ENCODE measurements at regions of chr2 and their contacts with region 1.

Region 1: DNA sequence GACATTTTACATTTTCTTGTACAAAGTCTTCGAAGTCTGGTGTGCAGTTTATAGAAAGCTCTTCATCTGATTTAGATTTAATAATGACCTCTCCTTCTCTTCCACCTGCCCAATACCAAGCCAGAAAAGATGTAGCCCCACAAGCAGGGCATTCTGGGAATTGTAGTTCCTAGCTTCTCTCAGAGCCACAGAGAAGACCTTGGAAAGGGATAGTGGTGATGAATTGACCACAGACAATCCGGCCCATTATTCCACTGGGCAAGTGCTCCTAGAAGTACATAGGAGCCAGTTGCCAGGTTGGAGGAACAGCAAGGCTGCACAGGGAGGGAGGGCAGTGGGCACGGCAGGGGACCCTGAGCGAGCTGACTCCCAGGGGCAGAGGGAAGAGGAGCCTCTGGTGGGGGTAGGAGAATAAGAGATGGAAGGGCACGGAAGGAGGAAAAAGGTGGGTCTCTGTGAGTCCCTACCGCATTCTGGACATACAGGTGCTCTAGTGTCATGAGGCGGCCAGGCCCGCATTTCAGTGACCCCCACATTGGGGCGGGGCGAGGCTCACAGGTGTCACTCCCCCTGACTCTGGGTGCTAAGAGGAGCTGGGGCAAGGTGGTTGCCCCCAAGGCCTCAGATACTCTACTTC is 152.5 kb upstream of the HAAO start:
- DNase-seq: no peak
- ATAC-seq: no peak
- H3K4me3 Mint-ChIP-seq: no peak overlapping the region
- H3K27ac Mint-ChIP-seq: no peak overlapping the region
- H3K4me1 Mint-ChIP-seq: peaks cover 3% of the 10 kb centered on the region
- H3K27me3 Mint-ChIP-seq: no peaks in the 10 kb centered on the region

Region 2: GRCh38 chr2:42828487-42829425 is 116.1 kb before region 1 on chr2:
- CTCF ChIA-PET with region 1: interaction called, 10 read pairs
- POLR2A ChIA-PET with region 1: no interaction called
- intact Hi-C with region 1: loop called in 1 of 2 experiments (anchors 2 kb)
- DNase-seq: peak; percentile 84
- ATAC-seq: peak; percentile 92
- H3K4me3 Mint-ChIP-seq: no peak overlapping the region
- H3K27ac Mint-ChIP-seq: no peak overlapping the region
- H3K4me1 Mint-ChIP-seq: peaks cover 10% of the 10 kb centered on the region
- H3K27me3 Mint-ChIP-seq: no peaks in the 10 kb centered on the region

Region 3: GRCh38 chr2:43024515-43025011 is 79.7 kb after region 1 on chr2:
- CTCF ChIA-PET with region 1: interaction called, 3 read pairs
- POLR2A ChIA-PET with region 1: no interaction called
- intact Hi-C with region 1: loop called in 1 of 2 experiments (anchors 2 kb)
- DNase-seq: peak; percentile 72
- ATAC-seq: peak; percentile 64
- H3K4me3 Mint-ChIP-seq: no peak overlapping the region
- H3K27ac Mint-ChIP-seq: no peak overlapping the region
- H3K4me1 Mint-ChIP-seq: peaks cover 14% of the 10 kb centered on the region
- H3K27me3 Mint-ChIP-seq: no peaks in the 10 kb centered on the region

Region 4: DNA sequence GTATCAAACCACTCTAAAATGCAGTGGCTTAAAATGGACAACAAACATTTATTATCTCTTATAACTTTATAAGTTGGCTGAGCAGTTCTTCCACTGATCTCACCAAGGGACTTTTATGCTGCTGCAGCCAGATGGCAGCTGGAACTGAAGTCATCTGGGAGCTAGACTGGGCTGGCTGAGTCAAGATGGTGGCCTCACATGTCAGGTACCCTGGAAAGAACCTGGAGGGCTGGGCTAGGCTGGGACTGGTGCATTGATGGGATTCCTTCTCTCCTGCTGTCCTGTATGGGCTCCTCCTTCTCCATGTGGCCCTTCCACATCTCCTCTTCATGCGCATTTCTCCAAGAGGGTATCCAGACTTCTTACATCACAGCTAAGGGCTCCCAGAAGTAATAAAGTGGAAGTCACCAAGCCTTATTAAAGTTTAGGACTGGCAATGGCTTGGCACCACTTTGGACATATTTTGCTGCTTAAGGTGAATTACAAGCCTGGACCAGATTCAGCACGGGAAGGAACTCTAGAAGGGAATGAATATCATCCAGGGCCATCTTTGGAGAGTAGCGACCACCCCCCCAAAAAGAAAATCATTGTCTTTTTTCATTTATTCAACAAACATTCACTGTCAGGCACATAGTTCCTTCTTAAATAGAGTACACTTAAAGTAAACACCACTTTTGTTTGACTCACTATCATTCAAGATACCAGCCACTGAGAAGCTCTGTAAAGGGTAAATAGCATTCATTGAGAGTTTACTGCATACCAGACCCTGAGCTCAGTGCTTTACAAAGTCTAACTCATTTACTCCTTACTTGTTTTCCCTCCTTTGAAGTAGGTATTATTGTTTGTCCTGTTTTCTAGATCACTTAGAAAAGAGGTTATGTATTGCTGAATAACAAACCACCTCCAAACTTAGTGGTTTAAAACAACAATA is 143.5 kb after region 1 on chr2:
- CTCF ChIA-PET with region 1: no interaction called
- POLR2A ChIA-PET with region 1: no interaction called
- intact Hi-C with region 1: no loop called
- DNase-seq: no peak
- ATAC-seq: no peak
- H3K4me3 Mint-ChIP-seq: no peak overlapping the region
- H3K27ac Mint-ChIP-seq: no peak overlapping the region
- H3K4me1 Mint-ChIP-seq: no peaks in the 10 kb centered on the region
- H3K27me3 Mint-ChIP-seq: no peaks in the 10 kb centered on the region

Region 5: DNA sequence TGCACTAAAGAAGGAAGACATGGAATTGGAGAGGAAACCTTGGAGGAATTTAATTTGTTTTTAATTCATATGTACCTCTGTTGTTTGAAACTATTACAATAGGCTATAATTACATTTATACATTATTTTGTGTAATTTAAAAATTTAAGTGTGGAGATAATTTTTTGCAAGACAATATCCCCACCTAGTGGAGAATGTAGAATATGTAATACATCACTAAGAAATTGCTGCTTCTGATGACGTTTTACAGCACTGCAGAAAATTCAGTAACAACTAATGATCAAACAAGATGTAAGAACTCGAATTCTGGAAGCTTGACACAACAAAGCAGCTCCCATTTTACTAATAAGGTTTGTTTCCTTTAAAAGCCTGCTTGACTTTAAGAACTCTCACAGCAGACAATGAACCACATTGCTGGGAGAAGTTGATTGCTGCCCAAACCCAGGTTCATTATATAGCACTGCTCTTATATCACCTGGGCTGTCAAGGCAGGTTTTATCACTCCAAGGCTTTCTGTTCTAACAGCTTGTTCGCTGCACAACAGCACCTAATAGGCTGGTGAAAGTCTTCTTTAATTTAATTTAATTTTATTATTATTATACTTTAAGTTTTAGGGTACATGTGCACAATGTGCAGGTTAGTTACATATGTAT is 597.5 kb after region 1 on chr2:
- CTCF ChIA-PET with region 1: interaction called, 6 read pairs
- POLR2A ChIA-PET with region 1: no interaction called
- intact Hi-C with region 1: loop called (anchors 1 to 5 kb)
- DNase-seq: no peak
- ATAC-seq: peak; percentile 60
- H3K4me3 Mint-ChIP-seq: no peak overlapping the region
- H3K27ac Mint-ChIP-seq: no peak overlapping the region
- H3K4me1 Mint-ChIP-seq: peaks cover 15% of the 10 kb centered on the region
- H3K27me3 Mint-ChIP-seq: no peaks in the 10 kb centered on the region

Region 6: DNA sequence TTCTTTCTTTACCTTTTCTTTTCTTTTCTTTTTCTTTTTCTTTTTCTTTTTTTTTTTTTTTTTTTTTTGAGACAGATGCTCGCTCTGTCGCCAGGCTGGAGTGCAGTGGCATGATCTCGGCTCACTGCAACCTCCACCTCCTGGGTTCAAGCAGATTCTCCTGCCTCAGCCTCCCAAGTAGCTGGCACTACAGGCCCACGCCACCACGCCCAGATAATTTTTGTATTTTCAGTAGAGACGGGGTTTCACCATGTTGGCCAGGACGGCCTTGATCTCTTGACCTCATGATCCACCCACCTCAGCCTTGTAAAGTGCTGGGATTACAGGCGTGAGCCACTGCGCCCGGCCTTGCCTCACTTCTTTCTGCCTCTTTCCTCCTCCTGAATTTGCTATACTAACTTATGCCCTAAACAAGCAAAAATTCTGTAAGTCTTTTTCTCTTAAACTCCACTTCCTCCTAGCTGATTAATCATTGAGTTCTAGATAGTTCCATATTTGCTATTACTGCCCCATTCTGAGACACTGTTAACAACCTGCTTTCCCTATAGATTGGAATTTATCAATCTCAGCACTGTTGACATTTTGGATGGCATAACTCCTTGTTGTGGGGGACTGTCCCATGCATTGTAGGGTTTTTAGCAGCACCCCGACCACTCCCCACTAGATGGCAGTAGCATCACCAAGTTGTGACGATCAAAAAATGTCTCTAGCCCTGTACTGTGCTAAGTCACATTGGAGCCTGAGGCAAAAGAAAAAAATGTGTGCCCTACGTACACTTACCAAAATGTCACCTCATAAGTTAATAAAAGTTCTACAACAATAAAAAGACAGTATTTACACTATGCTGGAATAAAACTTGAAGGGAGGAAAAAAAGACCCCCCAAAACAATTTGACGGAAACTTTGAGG is 667.3 kb after region 1 on chr2:
- CTCF ChIA-PET with region 1: interaction called, 6 read pairs
- POLR2A ChIA-PET with region 1: no interaction called
- intact Hi-C with region 1: loop called (anchors 1 kb)
- DNase-seq: peak; percentile 84
- ATAC-seq: peak; percentile 96
- H3K4me3 Mint-ChIP-seq: no peak overlapping the region
- H3K27ac Mint-ChIP-seq: peak overlapping the region; percentile 40
- H3K4me1 Mint-ChIP-seq: peaks cover 2% of the 10 kb centered on the region
- H3K27me3 Mint-ChIP-seq: peaks cover 5% of the 10 kb centered on the region